B cell (primary cell): ENCODE measurements at regions of chr14 and their contacts with region 1.

Region 1: GRCh38 chr14:52299692-52300278 is 14.3 kb upstream of the PTGER2 start:
- DNase-seq: peak; percentile 60
- ATAC-seq: peak; percentile 28
- H3K4me3 ChIP-seq: no peak overlapping the region
- H3K4me3 Mint-ChIP-seq: no peak overlapping the region
- H3K27ac ChIP-seq: no peak overlapping the region
- H3K27ac Mint-ChIP-seq: no peak overlapping the region
- H3K4me1 ChIP-seq: no peaks in the 10 kb centered on the region
- H3K4me1 Mint-ChIP-seq: no peaks in the 10 kb centered on the region
- H3K27me3 ChIP-seq: no peaks in the 10 kb centered on the region
- H3K27me3 Mint-ChIP-seq: peaks cover 19% of the 10 kb centered on the region
- CTCF ChIP-seq: peak; percentile 89

Region 2: DNA sequence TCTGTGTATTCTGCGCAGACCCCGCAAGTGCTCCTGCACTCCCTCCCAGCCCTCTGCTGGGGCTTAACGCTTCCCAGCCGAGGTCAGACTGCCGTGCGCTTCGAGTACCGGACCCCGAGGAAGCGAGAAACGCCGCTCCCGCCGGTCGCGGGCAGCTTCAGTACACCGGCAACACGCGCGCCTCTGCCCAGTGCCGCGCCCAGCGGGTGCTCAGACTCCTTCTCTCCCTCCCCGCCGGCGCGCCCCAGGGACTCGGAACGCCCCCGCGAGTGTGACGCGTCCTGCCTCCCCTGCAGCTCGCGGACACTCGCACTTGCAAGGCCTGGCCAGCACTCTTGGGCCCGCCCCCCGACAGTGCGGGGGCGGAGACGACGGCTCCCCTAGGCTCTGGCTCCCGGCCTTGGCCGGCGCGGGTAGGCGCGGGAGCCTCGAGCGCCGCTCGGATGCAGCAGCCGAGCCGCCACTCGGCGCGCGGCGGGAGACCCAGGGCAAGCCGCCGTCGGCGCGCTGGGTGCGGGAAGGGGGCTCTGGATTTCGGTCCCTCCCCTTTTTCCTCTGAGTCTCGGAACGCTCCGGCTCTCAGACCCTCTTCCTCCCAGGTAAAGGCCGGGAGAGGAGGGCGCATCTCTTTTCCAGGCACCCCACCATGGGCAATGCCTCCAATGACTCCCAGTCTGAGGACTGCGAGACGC is 14.3 kb after region 1 on chr14 and contains the start of gene PTGER2:
- CTCF ChIA-PET with region 1: interaction called, 15 read pairs
- POLR2A ChIA-PET with region 1: no interaction called
- intact Hi-C with region 1: no loop called
- DNase-seq: peak; percentile 58
- ATAC-seq: peak; percentile 56
- H3K4me3 ChIP-seq: peak within 1 kb of the TSS; percentile 37 to 54 (median 50)
- H3K4me3 Mint-ChIP-seq: peak within 1 kb of the TSS; percentile 95
- H3K27ac ChIP-seq: no peak within 1 kb of the TSS
- H3K27ac Mint-ChIP-seq: peak within 1 kb of the TSS; percentile 3
- H3K4me1 ChIP-seq: peaks cover 49 to 57% of the 10 kb centered on the region in 2 donors
- H3K4me1 Mint-ChIP-seq: peaks cover 49% of the 10 kb centered on the region
- H3K27me3 ChIP-seq: peaks cover 0 to 77% (median 52%) of the 10 kb centered on the region in 4 experiments
- H3K27me3 Mint-ChIP-seq: peaks cover 57% of the 10 kb centered on the region
- CTCF ChIP-seq: no peak
- total RNA-seq, gene PTGER2: 0.32 and 0.44 TPM in 2 replicates

Region 3: GRCh38 chr14:52473557-52473956 is 173.8 kb after region 1 on chr14:
- CTCF ChIA-PET with region 1: interaction called, 7 read pairs
- POLR2A ChIA-PET with region 1: no interaction called
- intact Hi-C with region 1: loop called (anchors 1 kb)
- DNase-seq: peak; percentile 50
- ATAC-seq: no peak
- H3K4me3 ChIP-seq: no peak overlapping the region
- H3K4me3 Mint-ChIP-seq: no peak overlapping the region
- H3K27ac ChIP-seq: no peak overlapping the region
- H3K27ac Mint-ChIP-seq: no peak overlapping the region
- H3K4me1 ChIP-seq: no peaks in the 10 kb centered on the region
- H3K4me1 Mint-ChIP-seq: no peaks in the 10 kb centered on the region
- H3K27me3 ChIP-seq: no peaks in the 10 kb centered on the region
- H3K27me3 Mint-ChIP-seq: no peaks in the 10 kb centered on the region
- CTCF ChIP-seq: peak; percentile 50